ENCODE measurements at regions of chr7 and their contacts with region 1.

Region 1: GRCh38 chr7:116258734-116259133 is 48.4 kb downstream of the TES start:
- DNase-seq: peak; percentile 85
- H3K4me3 ChIP-seq: no peak overlapping the region
- H3K27ac ChIP-seq: peak overlapping the region; percentile 32
- H3K4me1 ChIP-seq: peaks cover 28% of the 10 kb centered on the region
- H3K27me3 ChIP-seq: no peaks in the 10 kb centered on the region
- CTCF ChIP-seq: peak; percentile 43 to 48
- POLR2A ChIP-seq: peak; percentile 22

Region 2: DNA sequence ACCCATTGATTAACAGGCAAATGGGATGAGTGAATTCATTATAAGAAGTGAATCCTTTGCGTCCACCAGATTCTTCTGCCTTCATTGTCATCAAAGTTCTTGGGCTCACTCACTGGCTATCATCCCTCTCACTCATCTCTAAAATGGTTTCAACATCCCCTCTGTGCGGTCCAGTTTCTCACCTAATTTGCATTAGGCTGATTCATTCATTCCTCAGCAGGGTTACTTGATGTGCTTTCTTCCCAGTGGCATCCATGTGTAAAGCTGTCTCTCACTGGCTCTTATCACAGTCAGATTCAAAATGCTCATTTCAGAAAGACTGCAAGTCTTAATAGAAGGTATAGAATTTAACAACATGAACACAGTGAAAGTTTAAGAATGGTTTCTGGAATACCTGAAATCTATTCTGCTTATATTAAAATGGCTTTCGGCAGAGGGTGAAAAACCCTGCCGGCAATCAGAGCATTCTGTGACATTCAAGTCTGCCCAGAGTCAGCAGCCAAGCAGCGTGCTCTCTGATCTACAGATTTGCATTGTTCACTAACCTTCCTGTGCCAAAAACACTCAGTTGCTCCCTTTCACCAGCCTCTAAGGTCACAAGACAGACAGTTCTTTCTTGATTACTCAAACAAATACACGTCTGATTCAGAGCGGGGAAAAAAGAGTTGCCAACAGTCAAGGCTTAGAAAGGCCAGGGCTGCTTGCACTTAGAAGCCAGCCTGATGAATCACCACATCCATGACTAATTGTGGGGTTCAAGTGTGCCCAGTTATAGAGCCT is 58.3 kb after region 1 on chr7:
- CTCF ChIA-PET with region 1: interaction called, 7 read pairs
- POLR2A ChIA-PET with region 1: no interaction called
- dilution Hi-C with region 1: no loop called
- intact Hi-C with region 1: loop called (anchors 1 kb)
- DNase-seq: peak; percentile 99
- H3K4me3 ChIP-seq: peak overlapping the region in 2 of 3 experiments; percentile 12 to 57
- H3K27ac ChIP-seq: peak overlapping the region; percentile 97
- H3K4me1 ChIP-seq: peaks cover 63% of the 10 kb centered on the region
- H3K27me3 ChIP-seq: no peaks in the 10 kb centered on the region
- CTCF ChIP-seq: no peak
- POLR2A ChIP-seq: peak; percentile 15

Region 3: DNA sequence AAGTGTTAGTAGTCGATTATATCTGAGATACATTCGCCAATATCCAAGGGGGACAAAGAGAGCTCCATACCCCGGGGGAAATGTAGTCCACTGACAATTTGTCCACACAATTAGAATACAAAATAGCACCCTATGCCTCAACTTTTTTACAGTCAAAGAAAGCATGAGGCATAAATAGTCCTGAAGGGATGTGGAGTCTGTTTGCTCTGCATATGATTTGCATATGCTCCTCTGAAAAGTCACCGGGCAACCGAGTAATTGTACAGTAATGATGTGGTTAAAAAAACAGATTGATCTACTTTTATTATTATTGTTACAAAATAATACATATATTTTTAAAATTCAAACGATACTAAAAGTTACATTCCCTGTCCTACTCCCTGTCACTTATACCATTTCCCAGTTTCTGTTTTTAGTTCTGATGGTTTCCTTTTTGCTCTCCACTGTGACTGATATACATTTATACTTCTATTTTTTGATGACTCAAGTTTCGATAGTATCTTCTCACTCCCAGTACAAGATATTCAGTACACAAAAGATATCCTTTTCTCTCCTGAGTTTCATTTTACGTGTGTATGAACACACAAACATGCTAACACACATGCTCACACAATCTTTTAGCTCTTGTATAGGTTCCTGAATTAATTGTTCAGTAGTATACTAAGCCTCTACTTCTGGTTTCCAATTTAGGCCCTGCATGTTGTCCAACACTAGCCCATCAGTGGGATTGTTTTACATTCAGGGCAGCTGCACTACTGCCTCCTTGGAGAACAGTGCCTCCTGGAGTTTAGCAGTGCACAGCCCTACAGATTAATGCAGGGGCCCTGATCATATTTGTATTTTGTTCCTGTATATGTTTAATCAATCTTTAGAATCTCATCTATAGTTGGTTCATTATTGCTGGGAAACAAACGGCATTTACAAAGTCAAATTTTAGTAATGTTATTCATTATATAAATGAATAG is 82.5 kb after region 1 on chr7:
- CTCF ChIA-PET with region 1: interaction called, 21 read pairs
- POLR2A ChIA-PET with region 1: no interaction called
- dilution Hi-C with region 1: no loop called
- intact Hi-C with region 1: loop called (anchors 1 kb)
- DNase-seq: peak; percentile 72
- H3K4me3 ChIP-seq: peak overlapping the region in 1 of 3 experiments; percentile 31
- H3K27ac ChIP-seq: peak overlapping the region; percentile 87
- H3K4me1 ChIP-seq: peaks cover 49% of the 10 kb centered on the region
- H3K27me3 ChIP-seq: no peaks in the 10 kb centered on the region
- CTCF ChIP-seq: peak; percentile 45 to 48
- POLR2A ChIP-seq: no peak

Region 4: GRCh38 chr7:116499168-116500077 is 240.7 kb after region 1 on chr7 and contains the start of gene CAV2:
- CTCF ChIA-PET with region 1: no interaction called
- POLR2A ChIA-PET with region 1: no interaction called
- dilution Hi-C with region 1: loop called (anchors 25 kb)
- intact Hi-C with region 1: loop called (anchors 1 kb)
- DNase-seq: peak; percentile 63
- H3K4me3 ChIP-seq: peak within 1 kb of the TSS; percentile 59 to 86 (median 82)
- H3K27ac ChIP-seq: peak within 1 kb of the TSS; percentile 83
- H3K4me1 ChIP-seq: peaks cover 31% of the 10 kb centered on the region
- H3K27me3 ChIP-seq: no peaks in the 10 kb centered on the region
- CTCF ChIP-seq: no peak
- POLR2A ChIP-seq: peak; percentile 76
- total RNA-seq, gene CAV2: 146 and 179 TPM in 2 replicates

Region 5: DNA sequence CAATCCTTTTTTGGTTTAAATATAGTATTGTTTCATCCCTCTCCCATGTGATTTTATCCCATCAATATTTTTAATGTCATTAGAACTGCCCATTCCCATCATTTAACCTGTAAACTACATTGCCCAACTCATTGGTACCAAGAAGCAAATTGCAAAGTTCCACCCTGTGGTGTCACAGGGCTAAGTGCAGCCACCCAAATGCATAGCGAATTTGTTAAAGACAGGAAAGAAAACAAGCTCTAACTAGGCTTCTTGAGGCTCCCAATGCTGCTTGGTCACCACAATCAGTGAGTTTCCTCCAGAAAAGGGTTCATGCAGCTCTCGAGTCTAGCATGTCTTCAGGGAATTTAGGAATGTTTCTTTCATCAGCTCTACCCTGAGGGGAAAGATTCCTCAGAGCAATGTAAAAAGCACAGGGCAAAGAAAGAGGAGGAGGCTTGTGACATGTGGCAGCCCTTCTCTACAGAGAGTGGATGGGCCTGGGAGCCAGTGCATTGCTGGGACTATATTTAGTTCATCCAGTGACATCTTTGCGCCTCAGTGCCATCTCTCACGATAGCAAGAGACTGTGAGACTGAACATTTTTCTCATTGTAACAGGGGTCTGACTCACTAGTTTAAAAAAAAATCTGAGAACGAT is 324.2 kb after region 1 on chr7:
- CTCF ChIA-PET with region 1: interaction called, 87 read pairs
- POLR2A ChIA-PET with region 1: no interaction called
- dilution Hi-C with region 1: no loop called
- intact Hi-C with region 1: no loop called
- DNase-seq: peak; percentile 32
- H3K4me3 ChIP-seq: no peak overlapping the region
- H3K27ac ChIP-seq: no peak overlapping the region
- H3K4me1 ChIP-seq: peaks cover 25% of the 10 kb centered on the region
- H3K27me3 ChIP-seq: no peaks in the 10 kb centered on the region
- CTCF ChIP-seq: no peak
- POLR2A ChIP-seq: no peak